ENCODE measurements at regions of chrX and their contacts with region 1.

Region 1: GRCh38 chrX:63754860-63755582 is 30.0 kb downstream of the ARHGEF9 start:
- DNase-seq: peak; percentile 93
- ATAC-seq: peak; percentile 95
- H3K4me3 ChIP-seq: peak overlapping the region; percentile 94
- H3K27ac ChIP-seq: peak overlapping the region; percentile 96
- H3K4me1 ChIP-seq: no peaks in the 10 kb centered on the region
- H3K27me3 ChIP-seq: peaks cover 2% of the 10 kb centered on the region
- CTCF ChIP-seq: no peak
- POLR2A ChIP-seq: peak; percentile 66
- RAD21 ChIP-seq: no peak

Region 2: DNA sequence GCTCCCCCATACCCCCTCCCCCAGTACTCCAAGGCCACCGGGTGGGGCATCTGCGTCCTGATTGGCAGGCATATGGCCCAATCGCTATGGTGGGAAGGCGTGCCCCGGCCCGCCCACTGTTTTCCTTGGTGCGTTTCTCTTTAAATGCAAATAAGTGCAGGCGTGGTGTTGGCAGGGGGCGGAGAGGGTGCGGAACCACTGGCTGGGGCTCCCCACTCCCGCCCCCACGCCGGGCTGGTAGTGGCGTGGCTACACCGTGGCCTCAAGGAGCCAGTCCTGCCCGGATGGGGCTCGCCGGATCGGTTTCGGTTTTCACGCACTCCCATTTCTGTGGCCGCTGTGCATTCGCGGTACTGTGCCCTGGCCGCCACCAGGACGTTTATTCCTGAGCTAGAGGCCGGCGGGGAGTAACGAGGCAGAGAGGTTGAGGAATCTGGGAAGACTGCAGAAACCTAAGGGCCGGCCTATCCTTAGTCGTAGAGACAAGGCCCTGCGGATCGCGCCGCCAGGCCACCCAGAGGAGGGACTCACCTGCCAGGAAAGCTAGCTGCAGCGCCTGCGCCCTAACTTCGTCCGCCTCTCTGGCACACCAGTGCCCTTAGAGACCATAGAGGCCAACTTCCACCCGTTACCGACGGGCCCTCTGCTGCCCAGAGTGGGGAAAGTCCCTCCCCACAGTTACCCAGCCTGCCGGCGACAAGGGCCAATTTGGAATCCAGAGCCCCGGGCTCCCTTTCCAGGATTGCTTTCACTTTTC is 450.9 kb after region 1 on chrX:
- CTCF ChIA-PET with region 1: no interaction called
- POLR2A ChIA-PET with region 1: no interaction called
- dilution Hi-C with region 1: no loop called
- in situ Hi-C with region 1: loop called (anchors 10 kb)
- intact Hi-C with region 1: no loop called
- DNase-seq: peak; percentile 87
- ATAC-seq: peak; percentile 81
- H3K4me3 ChIP-seq: peak overlapping the region; percentile 79
- H3K27ac ChIP-seq: peak overlapping the region; percentile 67
- H3K4me1 ChIP-seq: peaks cover 8% of the 10 kb centered on the region
- H3K27me3 ChIP-seq: no peaks in the 10 kb centered on the region
- CTCF ChIP-seq: no peak
- POLR2A ChIP-seq: peak; percentile 58; the same call in 1 of the 2 replicates
- RAD21 ChIP-seq: no peak; the same call in 1 of the 2 replicates

Measured in IMR-90 (cell line).